PC-3 (cell line): ENCODE measurements at regions of chr18 and their contacts with region 1.

Region 1: GRCh38 chr18:72544092-72544886 is at the start of gene CBLN2:
- DNase-seq: peak; percentile 75
- ATAC-seq: peak; percentile 96
- H3K4me3 ChIP-seq: peak within 1 kb of the TSS; percentile 66
- H3K27ac ChIP-seq: no peak within 1 kb of the TSS
- H3K4me1 ChIP-seq: peaks cover 10% of the 10 kb centered on the region; the same call in 1 of the 2 replicates
- H3K27me3 ChIP-seq: peaks cover 72% of the 10 kb centered on the region
- CTCF ChIP-seq: peak; percentile 71
- total RNA-seq, gene CBLN2: not detected in 2 replicates

Region 2: DNA sequence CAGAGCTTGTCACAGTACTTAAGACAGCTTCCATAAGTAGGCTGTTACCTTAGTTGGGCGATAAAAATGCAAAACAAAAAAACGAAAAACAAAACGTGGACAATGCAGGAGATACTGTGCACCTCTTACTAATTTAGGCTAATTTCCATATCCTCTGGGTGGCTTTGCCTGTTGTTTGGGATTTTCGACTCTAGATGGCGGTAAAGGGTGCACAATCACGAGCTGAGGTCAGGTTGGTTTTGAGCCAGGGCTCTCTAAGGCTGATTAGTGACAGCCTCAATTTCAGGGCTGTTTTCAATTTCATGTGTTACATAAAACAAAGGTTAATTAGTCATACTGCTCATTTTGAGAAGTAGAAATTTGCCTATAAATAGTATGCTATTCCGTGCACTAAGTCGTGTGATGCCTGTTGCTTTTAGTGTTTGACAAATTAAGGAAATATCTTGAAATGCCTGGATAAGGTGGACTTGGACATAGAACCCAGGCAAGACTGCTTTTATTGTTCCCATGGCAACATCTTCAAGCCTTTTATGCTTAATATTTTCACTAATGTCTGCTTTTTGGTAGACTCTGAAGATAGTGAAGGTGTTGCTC is 1762.3 kb before region 1 on chr18:
- CTCF ChIA-PET with region 1: no interaction called
- POLR2A ChIA-PET with region 1: no interaction called
- intact Hi-C with region 1: loop called (anchors 5 kb)
- DNase-seq: peak; percentile 72
- ATAC-seq: peak; percentile 76
- H3K4me3 ChIP-seq: no peak overlapping the region
- H3K27ac ChIP-seq: no peak overlapping the region
- H3K4me1 ChIP-seq: no peaks in the 10 kb centered on the region
- H3K27me3 ChIP-seq: peaks cover 18% of the 10 kb centered on the region
- CTCF ChIP-seq: peak; percentile 81

Region 3: GRCh38 chr18:70931942-70932814 is 1612.1 kb before region 1 on chr18:
- CTCF ChIA-PET with region 1: no interaction called
- POLR2A ChIA-PET with region 1: no interaction called
- intact Hi-C with region 1: loop called (anchors 1 kb)
- DNase-seq: peak; percentile 49
- ATAC-seq: peak; percentile 54
- H3K4me3 ChIP-seq: no peak overlapping the region
- H3K27ac ChIP-seq: no peak overlapping the region
- H3K4me1 ChIP-seq: no peaks in the 10 kb centered on the region
- H3K27me3 ChIP-seq: no peaks in the 10 kb centered on the region
- CTCF ChIP-seq: peak; percentile 79

Region 4: DNA sequence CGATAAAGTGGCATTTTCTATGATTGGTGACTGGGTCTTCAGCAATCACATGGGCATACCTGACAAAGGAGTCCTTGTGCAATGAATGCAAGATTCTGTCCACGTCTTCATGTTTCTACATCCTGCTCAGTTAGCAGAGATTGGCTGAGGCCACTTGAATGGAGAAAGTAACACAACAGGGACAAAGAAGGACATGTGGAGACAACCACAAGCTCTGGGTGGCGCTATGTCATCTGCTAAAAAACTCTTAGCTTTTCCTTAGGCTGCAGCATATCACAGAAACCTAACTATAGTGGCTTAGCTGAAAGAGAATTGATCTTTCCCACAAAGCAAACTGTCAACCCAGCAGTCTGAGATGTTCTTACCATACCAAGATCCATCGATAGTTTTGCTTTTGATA is 1145.8 kb before region 1 on chr18:
- CTCF ChIA-PET with region 1: no interaction called
- POLR2A ChIA-PET with region 1: no interaction called
- intact Hi-C with region 1: loop called (anchors 5 kb)
- DNase-seq: peak; percentile 52
- ATAC-seq: peak; percentile 64
- H3K4me3 ChIP-seq: no peak overlapping the region
- H3K27ac ChIP-seq: no peak overlapping the region
- H3K4me1 ChIP-seq: no peaks in the 10 kb centered on the region
- H3K27me3 ChIP-seq: no peaks in the 10 kb centered on the region
- CTCF ChIP-seq: peak; percentile 55

Region 5: GRCh38 chr18:71443706-71444480 is 1100.4 kb before region 1 on chr18:
- CTCF ChIA-PET with region 1: interaction called, 10 read pairs
- POLR2A ChIA-PET with region 1: no interaction called
- intact Hi-C with region 1: no loop called
- DNase-seq: peak; percentile 7
- ATAC-seq: no peak; the same call in 1 of the 2 replicates
- H3K4me3 ChIP-seq: no peak overlapping the region
- H3K27ac ChIP-seq: no peak overlapping the region
- H3K4me1 ChIP-seq: no peaks in the 10 kb centered on the region
- H3K27me3 ChIP-seq: no peaks in the 10 kb centered on the region
- CTCF ChIP-seq: no peak

Region 6: GRCh38 chr18:72391951-72392350 is 152.3 kb before region 1 on chr18:
- CTCF ChIA-PET with region 1: no interaction called
- POLR2A ChIA-PET with region 1: no interaction called
- intact Hi-C with region 1: no loop called
- DNase-seq: no peak
- ATAC-seq: no peak
- H3K4me3 ChIP-seq: no peak overlapping the region
- H3K27ac ChIP-seq: no peak overlapping the region
- H3K4me1 ChIP-seq: no peaks in the 10 kb centered on the region
- H3K27me3 ChIP-seq: no peaks in the 10 kb centered on the region
- CTCF ChIP-seq: no peak

Region 7: GRCh38 chr18:72492497-72492896 is 51.8 kb before region 1 on chr18:
- CTCF ChIA-PET with region 1: no interaction called
- POLR2A ChIA-PET with region 1: no interaction called
- intact Hi-C with region 1: no loop called
- DNase-seq: no peak
- ATAC-seq: no peak
- H3K4me3 ChIP-seq: no peak overlapping the region
- H3K27ac ChIP-seq: no peak overlapping the region
- H3K4me1 ChIP-seq: no peaks in the 10 kb centered on the region
- H3K27me3 ChIP-seq: no peaks in the 10 kb centered on the region
- CTCF ChIP-seq: no peak

Region 8: DNA sequence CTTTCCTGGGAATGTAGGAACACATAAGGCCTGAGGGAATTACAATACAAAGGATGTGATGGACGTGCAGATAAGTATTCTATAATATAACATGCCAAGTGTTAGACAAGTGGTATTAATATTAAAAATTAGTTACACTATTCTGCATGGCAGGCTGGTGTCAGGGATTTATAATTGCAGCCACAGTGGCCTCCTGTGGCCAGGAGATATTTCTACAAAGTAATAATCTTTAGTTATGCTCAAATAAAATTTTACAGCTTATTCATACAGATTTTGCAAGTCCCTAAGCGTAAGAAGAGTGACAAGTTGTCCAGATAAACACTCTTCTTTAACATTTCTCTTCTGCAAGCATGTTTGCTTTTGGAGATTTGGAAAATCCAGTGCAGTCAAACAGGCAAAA is 90.2 kb after region 1 on chr18:
- CTCF ChIA-PET with region 1: interaction called, 4 read pairs
- POLR2A ChIA-PET with region 1: no interaction called
- intact Hi-C with region 1: loop called (anchors 5 kb)
- DNase-seq: peak; percentile 9
- ATAC-seq: peak; percentile 62
- H3K4me3 ChIP-seq: no peak overlapping the region
- H3K27ac ChIP-seq: no peak overlapping the region
- H3K4me1 ChIP-seq: no peaks in the 10 kb centered on the region
- H3K27me3 ChIP-seq: peaks cover 16% of the 10 kb centered on the region
- CTCF ChIP-seq: no peak; the same call in 1 of the 2 replicates